ENCODE measurements at regions of chr1 and their contacts with region 1.

Region 1: GRCh38 chr1:100459358-100460114 is 78.4 kb upstream of the GPR88 start:
- DNase-seq: peak; percentile 71
- H3K4me3 ChIP-seq: no peak overlapping the region
- H3K27ac ChIP-seq: no peak overlapping the region
- H3K27me3 ChIP-seq: no peaks in the 10 kb centered on the region
- CTCF ChIP-seq: peak; percentile 91

Region 2: DNA sequence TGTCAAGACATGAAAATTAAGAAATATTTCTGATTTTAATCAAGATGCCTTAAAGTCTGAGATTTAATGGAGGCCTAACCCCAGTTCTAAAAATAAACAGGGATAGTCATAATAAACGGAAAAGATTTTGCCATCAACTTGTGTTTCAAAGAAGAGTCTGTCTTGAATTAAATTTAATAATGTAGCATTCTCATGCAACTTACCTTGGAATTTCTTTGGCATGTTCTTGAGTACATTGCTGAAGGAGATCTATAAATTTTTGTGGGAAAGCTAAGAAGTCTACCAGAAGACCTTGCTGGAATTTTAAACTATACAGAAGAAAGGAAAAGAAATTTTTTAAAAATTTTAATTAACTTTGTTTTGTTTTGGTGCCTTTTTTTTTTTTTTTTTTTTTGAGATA is 337.4 kb before region 1 on chr1:
- CTCF ChIA-PET with region 1: interaction called, 11 read pairs
- POLR2A ChIA-PET with region 1: no interaction called
- DNase-seq: no peak
- H3K4me3 ChIP-seq: no peak overlapping the region
- H3K27ac ChIP-seq: no peak overlapping the region
- H3K27me3 ChIP-seq: no peaks in the 10 kb centered on the region
- CTCF ChIP-seq: no peak

Region 3: DNA sequence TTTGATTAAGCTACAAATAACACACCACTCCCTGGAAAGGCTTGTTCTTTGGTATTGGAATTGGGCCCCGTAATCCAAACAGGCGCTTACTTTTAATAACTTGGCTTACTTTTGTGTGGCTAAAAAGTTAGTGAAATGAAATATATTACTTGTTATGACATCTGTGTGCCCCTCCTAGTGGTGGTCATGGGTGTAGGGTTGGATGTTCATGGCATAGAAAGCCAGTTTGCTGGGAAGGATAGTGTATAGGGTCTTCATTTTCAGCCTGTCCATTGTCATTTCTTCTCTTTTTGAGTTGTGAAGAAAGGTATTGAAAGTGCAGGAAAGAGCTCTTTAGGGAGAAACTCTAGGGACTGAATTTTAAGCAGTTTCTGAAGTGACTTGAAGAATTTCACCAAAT is 101.3 kb before region 1 on chr1:
- CTCF ChIA-PET with region 1: interaction called, 11 read pairs
- POLR2A ChIA-PET with region 1: interaction called, 3 read pairs
- DNase-seq: no peak
- H3K4me3 ChIP-seq: no peak overlapping the region
- H3K27ac ChIP-seq: no peak overlapping the region
- H3K27me3 ChIP-seq: no peaks in the 10 kb centered on the region
- CTCF ChIP-seq: peak; percentile 48

Region 4: GRCh38 chr1:100443811-100444571 is 15.5 kb before region 1 on chr1:
- CTCF ChIA-PET with region 1: interaction called, 13 read pairs
- POLR2A ChIA-PET with region 1: no interaction called
- DNase-seq: peak; percentile 33
- H3K4me3 ChIP-seq: no peak overlapping the region
- H3K27ac ChIP-seq: no peak overlapping the region
- H3K27me3 ChIP-seq: no peaks in the 10 kb centered on the region
- CTCF ChIP-seq: no peak

Region 5: GRCh38 chr1:100476735-100477290 is 17.3 kb after region 1 on chr1:
- CTCF ChIA-PET with region 1: interaction called, 12 read pairs
- POLR2A ChIA-PET with region 1: no interaction called
- DNase-seq: no peak
- H3K4me3 ChIP-seq: no peak overlapping the region
- H3K27ac ChIP-seq: no peak overlapping the region
- H3K27me3 ChIP-seq: no peaks in the 10 kb centered on the region
- CTCF ChIP-seq: no peak

Region 6: GRCh38 chr1:100767176-100767890 is 307.8 kb after region 1 on chr1:
- CTCF ChIA-PET with region 1: no interaction called
- POLR2A ChIA-PET with region 1: no interaction called
- DNase-seq: no peak
- H3K4me3 ChIP-seq: no peak overlapping the region
- H3K27ac ChIP-seq: no peak overlapping the region
- H3K27me3 ChIP-seq: no peaks in the 10 kb centered on the region
- CTCF ChIP-seq: no peak

Region 7: GRCh38 chr1:100847361-100848082 is 388.0 kb after region 1 on chr1:
- CTCF ChIA-PET with region 1: interaction called, 10 read pairs
- POLR2A ChIA-PET with region 1: no interaction called
- DNase-seq: no peak
- H3K4me3 ChIP-seq: peak overlapping the region; percentile 38
- H3K27ac ChIP-seq: no peak overlapping the region
- H3K27me3 ChIP-seq: no peaks in the 10 kb centered on the region
- CTCF ChIP-seq: no peak

Region 8: GRCh38 chr1:100875228-100875627 is 415.7 kb after region 1 on chr1:
- CTCF ChIA-PET with region 1: interaction called, 481 read pairs
- POLR2A ChIA-PET with region 1: no interaction called
- DNase-seq: no peak
- H3K4me3 ChIP-seq: no peak overlapping the region
- H3K27ac ChIP-seq: no peak overlapping the region
- H3K27me3 ChIP-seq: no peaks in the 10 kb centered on the region
- CTCF ChIP-seq: no peak